ENCODE measurements at regions of chr1 and their contacts with region 1.

Region 1: GRCh38 chr1:147242439-147243227 is at the start of gene CHD1L:
- DNase-seq: peak; percentile 96
- H3K4me3 Mint-ChIP-seq: peak within 1 kb of the TSS; percentile 90
- H3K27ac Mint-ChIP-seq: peak within 1 kb of the TSS; percentile 77
- H3K4me1 Mint-ChIP-seq: peaks cover 36% of the 10 kb centered on the region
- H3K27me3 Mint-ChIP-seq: no peaks in the 10 kb centered on the region
- total RNA-seq, gene CHD1L: 71.2 to 72.0 TPM

Region 2: GRCh38 chr1:147204080-147204479 is 38.6 kb before region 1 on chr1:
- CTCF ChIA-PET with region 1: no interaction called
- POLR2A ChIA-PET with region 1: no interaction called
- intact Hi-C with region 1: no loop called
- DNase-seq: no peak
- H3K4me3 Mint-ChIP-seq: no peak overlapping the region
- H3K27ac Mint-ChIP-seq: no peak overlapping the region
- H3K4me1 Mint-ChIP-seq: peaks cover 4% of the 10 kb centered on the region
- H3K27me3 Mint-ChIP-seq: no peaks in the 10 kb centered on the region

Region 3: GRCh38 chr1:147225193-147225730 is 17.4 kb before region 1 on chr1 and contains the start of gene FMO5:
- CTCF ChIA-PET with region 1: interaction called, 13 read pairs
- POLR2A ChIA-PET with region 1: interaction called, 7 read pairs
- intact Hi-C with region 1: loop called (anchors 1 kb)
- DNase-seq: peak; percentile 69
- H3K4me3 Mint-ChIP-seq: peak within 1 kb of the TSS; percentile 82
- H3K27ac Mint-ChIP-seq: peak within 1 kb of the TSS; percentile 28
- H3K4me1 Mint-ChIP-seq: peaks cover 10% of the 10 kb centered on the region
- H3K27me3 Mint-ChIP-seq: no peaks in the 10 kb centered on the region
- total RNA-seq, gene FMO5: 0.27 to 0.33 TPM

Measured in activated CD4-positive, alpha-beta memory T cell treated with anti-CD3 and anti-CD28 coated beads for 36 hours (primary cell).